Endothelial cell of umbilical vein (primary cell): ENCODE measurements at regions of chr10 and their contacts with region 1.

Region 1: GRCh38 chr10:84523526-84523925 is 195.1 kb downstream of the CCSER2 start:
- DNase-seq: peak; percentile 53
- H3K4me3 ChIP-seq: no peak overlapping the region
- H3K27ac ChIP-seq: no peak overlapping the region
- H3K4me1 ChIP-seq: peaks cover 12% of the 10 kb centered on the region
- H3K27me3 ChIP-seq: no peaks in the 10 kb centered on the region
- CTCF ChIP-seq: no peak
- POLR2A ChIP-seq: no peak

Region 2: DNA sequence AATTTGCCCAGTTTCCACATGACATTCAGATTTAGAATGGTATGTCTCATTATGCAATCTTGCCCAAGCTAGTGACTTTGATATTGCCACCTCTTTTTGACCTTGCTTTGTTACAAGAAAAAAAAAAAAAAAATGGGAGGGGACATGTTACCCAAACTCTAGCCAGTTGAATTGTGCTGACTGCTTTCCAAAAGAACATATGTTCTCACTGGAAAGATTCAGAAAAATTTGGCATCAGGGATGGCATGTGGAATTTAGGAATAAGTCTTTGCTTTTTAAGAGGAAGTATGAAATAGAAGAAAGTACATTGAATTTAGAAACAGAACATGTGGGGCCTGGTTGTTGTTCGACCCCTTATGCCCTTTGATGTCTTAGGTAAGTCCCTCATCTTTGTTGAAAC is 1801.7 kb before region 1 on chr10:
- CTCF ChIA-PET with region 1: no interaction called
- POLR2A ChIA-PET with region 1: no interaction called
- dilution Hi-C with region 1: no loop called
- intact Hi-C with region 1: loop called (anchors 5 kb)
- DNase-seq: no peak
- H3K4me3 ChIP-seq: no peak overlapping the region
- H3K27ac ChIP-seq: no peak overlapping the region
- H3K4me1 ChIP-seq: no peaks in the 10 kb centered on the region
- H3K27me3 ChIP-seq: no peaks in the 10 kb centered on the region
- CTCF ChIP-seq: no peak
- POLR2A ChIP-seq: no peak

Region 3: GRCh38 chr10:84510121-84510520 is 13.4 kb before region 1 on chr10:
- CTCF ChIA-PET with region 1: interaction called, 12 read pairs
- POLR2A ChIA-PET with region 1: interaction called, 4 read pairs
- dilution Hi-C with region 1: no loop called
- intact Hi-C with region 1: no loop called
- DNase-seq: peak; percentile 86
- H3K4me3 ChIP-seq: no peak overlapping the region
- H3K27ac ChIP-seq: peak overlapping the region; percentile 94
- H3K4me1 ChIP-seq: peaks cover 40% of the 10 kb centered on the region
- H3K27me3 ChIP-seq: no peaks in the 10 kb centered on the region
- CTCF ChIP-seq: no peak
- POLR2A ChIP-seq: no peak

Region 4: DNA sequence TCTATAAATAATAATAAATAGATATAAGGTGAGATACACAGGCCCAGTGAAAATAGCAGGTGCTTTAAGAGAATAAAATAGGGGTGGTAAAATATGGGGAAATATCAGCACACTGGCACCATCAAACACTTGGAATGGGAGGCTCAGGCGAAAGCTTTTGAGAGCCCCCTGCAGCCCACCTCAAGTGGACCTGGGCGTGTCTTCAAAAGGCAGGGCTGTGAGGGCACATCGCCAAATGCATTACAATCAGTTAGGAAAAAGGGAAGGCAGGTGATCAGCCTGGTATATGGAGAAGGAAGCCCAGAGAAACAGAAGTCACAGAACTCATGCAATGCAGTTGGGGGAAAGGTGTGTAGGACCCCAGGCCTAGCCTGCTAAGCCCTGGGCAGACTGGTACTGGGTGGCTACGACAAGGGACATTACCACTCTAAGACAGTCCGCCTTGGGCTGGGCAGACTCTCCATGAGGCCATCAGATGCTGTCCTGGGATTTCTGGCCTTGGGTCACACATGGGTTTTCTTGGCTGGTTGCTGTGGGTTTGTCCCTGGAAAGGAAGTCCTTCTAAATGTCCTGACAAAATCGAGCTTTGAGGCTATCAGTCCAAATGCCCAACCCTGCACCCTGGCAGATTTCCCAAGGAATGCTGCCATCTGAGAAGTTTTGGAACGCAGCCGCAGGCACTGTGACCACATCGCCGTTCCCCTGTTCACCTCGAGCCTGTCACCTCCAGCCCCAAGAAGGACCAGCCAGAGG is 1512.4 kb after region 1 on chr10:
- CTCF ChIA-PET with region 1: no interaction called
- POLR2A ChIA-PET with region 1: no interaction called
- dilution Hi-C with region 1: no loop called
- intact Hi-C with region 1: no loop called
- DNase-seq: no peak
- H3K4me3 ChIP-seq: no peak overlapping the region
- H3K27ac ChIP-seq: no peak overlapping the region
- H3K4me1 ChIP-seq: no peaks in the 10 kb centered on the region
- H3K27me3 ChIP-seq: no peaks in the 10 kb centered on the region
- CTCF ChIP-seq: no peak
- POLR2A ChIP-seq: no peak